Sciatic nerve (tissue), 2 donors: ENCODE measurements at regions of chr2 and their contacts with region 1.

Region 1: GRCh38 chr2:236168110-236169067 is at the start of gene GBX2:
- DNase-seq: no peak
- ATAC-seq: peak; percentile 30
- total RNA-seq, gene GBX2: not detected

Region 2: DNA sequence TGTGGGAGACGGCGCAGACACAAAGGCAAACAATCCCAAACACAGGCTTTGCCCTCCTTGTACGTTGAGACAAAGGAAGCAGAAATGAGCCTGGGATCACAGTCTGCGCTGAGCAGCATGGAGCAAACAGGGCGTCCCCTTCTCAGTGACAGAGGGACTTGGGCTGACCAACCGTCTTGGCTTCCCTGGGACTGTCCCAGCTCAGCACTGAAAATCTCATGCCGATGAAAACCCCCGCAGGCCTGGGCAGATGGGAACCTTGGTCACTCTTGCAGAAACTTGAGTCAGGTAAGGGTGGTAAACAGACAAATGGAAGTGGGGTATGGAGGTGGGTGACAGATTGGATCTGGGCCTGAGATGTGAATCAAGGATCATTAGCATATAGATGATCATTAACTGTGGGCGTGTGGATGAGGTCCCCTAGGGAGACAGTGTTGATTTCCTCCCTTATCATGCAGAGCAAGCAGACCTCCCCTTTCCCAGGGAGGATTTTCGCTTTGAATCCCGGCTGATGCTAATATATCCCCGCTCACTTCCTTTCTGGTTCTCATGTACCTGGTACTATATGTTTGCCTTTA is 1235.7 kb before region 1 on chr2:
- intact Hi-C with region 1: no loop called
- DNase-seq: no peak
- ATAC-seq: no peak

Region 3: GRCh38 chr2:235762832-235763598 is 405.4 kb before region 1 on chr2:
- intact Hi-C with region 1: no loop called
- DNase-seq: no peak
- ATAC-seq: no peak

Region 4: GRCh38 chr2:235779444-235779896 is 388.9 kb before region 1 on chr2:
- intact Hi-C with region 1: loop called (anchors 10 kb)
- DNase-seq: peak; percentile 86
- ATAC-seq: peak; percentile 85

Region 5: GRCh38 chr2:236843161-236843968 is 675.0 kb after region 1 on chr2:
- intact Hi-C with region 1: no loop called
- DNase-seq: no peak
- ATAC-seq: no peak